ENCODE measurements at regions of chr13 and their contacts with region 1.

Region 1: GRCh38 chr13:42028113-42028799 is 20.2 kb upstream of the DGKH start:
- DNase-seq: no peak
- H3K4me3 ChIP-seq: no peak overlapping the region
- H3K27me3 ChIP-seq: no peaks in the 10 kb centered on the region
- CTCF ChIP-seq: no peak

Region 2: DNA sequence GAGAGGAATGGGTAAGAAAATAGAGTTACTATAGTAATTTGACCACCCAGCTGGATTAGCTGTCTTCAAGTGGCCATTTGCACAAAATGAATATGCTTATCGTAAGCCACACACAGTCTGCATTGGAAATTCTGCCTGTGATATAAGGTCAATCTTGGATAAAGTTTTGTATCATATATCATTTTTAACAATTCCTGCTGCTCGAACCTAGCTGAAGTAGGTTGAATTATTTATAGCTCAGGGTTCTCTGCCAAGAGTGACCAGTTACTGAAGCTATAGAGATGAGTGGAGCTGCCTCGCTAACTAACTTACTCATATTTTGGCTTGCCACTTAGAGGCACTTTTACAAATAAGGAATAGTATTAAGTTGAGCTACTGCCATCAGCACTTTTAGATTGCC is 350.0 kb before region 1 on chr13:
- CTCF ChIA-PET with region 1: no interaction called
- POLR2A ChIA-PET with region 1: interaction called, 10 read pairs
- DNase-seq: no peak
- H3K4me3 ChIP-seq: no peak overlapping the region
- H3K27me3 ChIP-seq: no peaks in the 10 kb centered on the region
- CTCF ChIP-seq: no peak

Region 3: GRCh38 chr13:41820581-41821237 is 207.5 kb before region 1 on chr13:
- CTCF ChIA-PET with region 1: no interaction called
- POLR2A ChIA-PET with region 1: no interaction called
- DNase-seq: no peak
- H3K4me3 ChIP-seq: no peak overlapping the region
- H3K27me3 ChIP-seq: no peaks in the 10 kb centered on the region
- CTCF ChIP-seq: no peak

Measured in BJ (cell line).